Heart right ventricle (tissue), 16 donors: ENCODE measurements at regions of chr21 and their contacts with region 1.

Region 1: GRCh38 chr21:39263372-39263771 is 50.1 kb downstream of the BRWD1 start:
- DNase-seq: no peak
- ATAC-seq: no peak
- H3K4me3 ChIP-seq: no peak overlapping the region
- H3K27ac ChIP-seq: no peak overlapping the region
- H3K4me1 ChIP-seq: no peaks in the 10 kb centered on the region
- H3K27me3 ChIP-seq: no peaks in the 10 kb centered on the region
- CTCF ChIP-seq: no peak

Region 2: GRCh38 chr21:39189857-39190604 is 73.3 kb before region 1 on chr21:
- intact Hi-C with region 1: loop called in 1 of 10 experiments (anchors 10 kb)
- DNase-seq: no peak
- ATAC-seq: no peak
- H3K4me3 ChIP-seq: no peak overlapping the region
- H3K27ac ChIP-seq: no peak overlapping the region
- H3K4me1 ChIP-seq: peaks cover 0 to 7% (median 0%) of the 10 kb centered on the region in 9 donors
- H3K27me3 ChIP-seq: no peaks in the 10 kb centered on the region
- CTCF ChIP-seq: no peak

Region 3: DNA sequence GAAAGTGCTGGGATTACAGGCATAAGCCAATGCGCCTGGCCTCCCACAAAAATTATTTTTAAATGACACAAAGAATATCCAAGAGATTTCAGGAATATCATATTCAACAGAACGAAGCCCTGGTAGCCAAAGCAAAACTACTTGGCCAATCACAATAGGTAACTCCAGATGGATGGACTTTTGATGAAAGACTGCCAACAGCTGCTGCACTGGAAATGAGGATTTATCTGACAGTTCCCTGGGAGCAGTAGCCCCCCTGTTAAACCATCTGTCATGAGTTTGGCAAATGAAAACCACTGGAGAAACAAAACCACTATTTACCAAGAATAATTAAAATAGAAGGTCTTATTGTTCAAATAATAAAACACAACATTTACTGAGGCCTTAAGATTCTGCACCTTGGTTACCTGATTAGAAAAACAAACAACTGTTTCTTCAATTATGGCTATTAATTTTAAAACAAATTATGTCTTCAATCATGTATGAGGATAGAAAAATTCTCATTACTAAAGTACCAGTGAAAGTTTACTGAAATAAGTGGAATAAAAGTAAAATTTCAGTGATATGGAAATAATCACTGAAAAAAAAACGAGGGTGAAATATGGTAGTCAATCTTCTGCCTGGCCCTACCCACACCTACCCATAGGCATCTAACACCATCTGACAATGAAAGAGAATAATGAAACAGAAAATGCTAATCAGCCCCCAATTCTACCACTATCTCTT is 45.9 kb before region 1 on chr21:
- intact Hi-C with region 1: loop called in 1 of 10 experiments (anchors 5 kb)
- DNase-seq: no peak
- ATAC-seq: no peak
- H3K4me3 ChIP-seq: no peak overlapping the region
- H3K27ac ChIP-seq: no peak overlapping the region
- H3K4me1 ChIP-seq: peaks cover 0 to 13% (median 0%) of the 10 kb centered on the region in 9 donors
- H3K27me3 ChIP-seq: no peaks in the 10 kb centered on the region
- CTCF ChIP-seq: no peak